ENCODE measurements at regions of chr20 and their contacts with region 1.

Region 1: DNA sequence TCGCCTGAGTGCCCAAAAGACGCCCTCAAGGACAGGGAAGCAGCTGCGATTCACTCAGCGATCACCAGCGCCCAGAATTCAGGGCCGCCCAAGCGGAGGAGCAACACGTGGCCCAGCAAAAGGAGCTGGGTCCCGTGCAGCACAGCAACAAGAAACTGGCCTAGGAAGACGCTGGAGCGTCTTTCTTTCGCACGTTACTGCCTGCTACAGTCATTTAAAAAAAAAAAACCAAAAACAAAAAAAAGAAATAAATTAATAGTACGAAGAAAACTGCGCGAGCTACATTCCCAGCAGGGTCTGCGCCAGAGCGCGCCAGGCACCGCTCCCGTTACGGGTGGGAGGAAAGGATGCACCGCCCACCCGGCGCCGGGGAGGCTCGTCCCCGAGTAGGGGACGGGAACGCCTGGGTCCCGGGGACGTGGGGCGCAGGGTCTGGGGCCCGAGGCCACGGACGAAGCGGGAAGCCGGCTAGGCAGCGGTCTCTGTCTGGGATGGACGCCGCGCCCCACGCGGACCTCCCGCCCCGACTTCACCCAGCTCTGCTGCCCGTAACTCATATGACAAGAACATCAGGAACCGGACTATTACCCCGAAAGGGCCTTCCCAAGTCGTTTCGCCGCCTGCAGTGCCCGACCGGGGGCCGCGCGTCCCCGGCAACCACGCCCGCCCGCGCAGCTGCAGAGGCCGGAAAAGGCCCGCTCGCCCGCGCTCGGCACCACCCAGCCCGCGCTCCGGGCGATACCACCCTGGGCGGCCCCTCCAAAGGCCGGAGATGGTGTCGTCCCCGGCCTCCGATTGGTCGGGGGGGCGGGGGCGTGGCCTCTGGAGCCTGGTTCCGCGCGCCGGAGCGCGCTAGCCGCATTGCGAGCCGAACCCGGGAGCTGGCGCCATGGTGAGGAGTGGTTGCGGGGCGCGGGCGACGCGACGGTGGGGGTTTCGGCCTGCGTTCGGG is at the start of gene NOP56:
- DNase-seq: peak; percentile 91 to 98 (median 93)
- H3K4me3 ChIP-seq: peak within 1 kb of the TSS; percentile 87
- H3K27ac ChIP-seq: peak within 1 kb of the TSS; percentile 73 to 86
- H3K4me1 ChIP-seq: peaks cover 1% of the 10 kb centered on the region
- H3K27me3 ChIP-seq: no peaks in the 10 kb centered on the region
- CTCF ChIP-seq: peak in 1 of 3 donors; percentile 17
- EP300 ChIP-seq: no peak
- POLR2A ChIP-seq: peak; percentile 54
- total RNA-seq, gene NOP56: 62.0 to 181 (median 134) TPM

Region 2: DNA sequence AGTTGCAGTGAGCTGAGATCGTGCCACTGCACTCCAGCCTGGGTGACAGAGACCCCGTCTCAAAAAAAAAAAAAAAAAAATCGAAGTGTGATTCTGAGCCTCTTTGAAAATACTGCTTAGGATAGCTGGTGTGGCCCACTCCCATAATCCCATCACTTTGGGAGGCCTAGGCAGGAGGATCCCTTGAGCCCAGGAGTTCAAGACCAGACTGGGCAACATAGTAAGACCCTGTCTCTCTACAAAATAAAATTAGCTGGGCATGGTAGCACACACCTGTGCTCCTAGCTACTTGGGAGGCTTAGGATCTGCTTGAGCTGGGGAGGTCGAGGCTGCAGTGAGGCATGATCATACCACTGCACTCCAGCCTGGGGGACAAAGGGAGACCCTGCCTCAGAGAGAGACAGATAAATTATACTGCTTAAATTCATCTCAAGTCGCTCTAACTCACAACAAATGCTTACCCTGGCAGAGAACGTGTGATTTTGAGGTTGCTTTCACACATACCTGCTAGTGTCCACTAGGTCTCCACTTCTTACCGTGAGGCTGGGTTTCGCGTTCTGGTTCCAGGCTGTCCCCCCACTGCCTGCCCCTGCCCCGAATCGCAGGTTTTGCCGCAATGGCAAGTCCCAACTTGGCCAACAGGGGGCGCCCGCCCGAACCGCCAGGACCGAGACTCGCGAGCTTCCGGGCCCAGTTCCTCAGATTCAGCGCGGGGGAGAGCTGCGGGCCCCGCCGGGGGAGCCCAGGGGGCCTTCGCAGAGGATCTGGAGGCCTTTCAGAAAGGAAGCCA is 127.9 kb before region 1 on chr20:
- intact Hi-C with region 1: loop called in 3 of 4 experiments (anchors 2 to 10 kb)
- DNase-seq: peak; percentile 85 to 93 (median 91)
- H3K4me3 ChIP-seq: peak overlapping the region; percentile 67
- H3K27ac ChIP-seq: peak overlapping the region; percentile 78 to 81
- H3K4me1 ChIP-seq: no peaks in the 10 kb centered on the region
- H3K27me3 ChIP-seq: no peaks in the 10 kb centered on the region
- CTCF ChIP-seq: peak; percentile 92 to 98 (median 93)
- EP300 ChIP-seq: no peak
- POLR2A ChIP-seq: peak; percentile 74

Region 3: DNA sequence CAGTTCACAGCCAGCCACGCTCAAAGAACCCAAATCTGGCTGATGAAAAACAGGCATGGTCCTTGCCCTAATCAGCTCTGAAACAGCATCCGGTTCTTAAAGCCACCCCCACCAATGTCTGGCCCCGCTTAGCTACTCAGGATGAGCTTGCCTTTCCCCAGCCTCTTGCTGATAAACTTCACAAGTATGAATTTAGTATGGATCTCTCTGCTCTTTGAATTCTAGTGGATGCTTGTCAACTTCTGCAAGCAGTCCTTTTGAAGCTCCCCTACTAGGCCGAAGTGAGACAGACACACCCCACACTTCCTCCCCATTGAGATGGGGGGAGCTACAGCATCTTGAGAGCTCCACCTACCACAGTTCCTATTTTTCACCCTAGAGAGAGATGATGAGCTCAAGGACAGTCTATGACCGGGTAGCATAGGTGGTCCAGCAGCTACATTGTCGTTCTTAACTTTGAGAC is 77.2 kb after region 1 on chr20:
- intact Hi-C with region 1: no loop called
- DNase-seq: no peak
- H3K4me3 ChIP-seq: no peak overlapping the region
- H3K27ac ChIP-seq: no peak overlapping the region
- H3K4me1 ChIP-seq: no peaks in the 10 kb centered on the region
- H3K27me3 ChIP-seq: no peaks in the 10 kb centered on the region
- CTCF ChIP-seq: no peak
- EP300 ChIP-seq: no peak
- POLR2A ChIP-seq: no peak